BJ (cell line): ENCODE measurements at regions of chr1 and their contacts with region 1.

Region 1: DNA sequence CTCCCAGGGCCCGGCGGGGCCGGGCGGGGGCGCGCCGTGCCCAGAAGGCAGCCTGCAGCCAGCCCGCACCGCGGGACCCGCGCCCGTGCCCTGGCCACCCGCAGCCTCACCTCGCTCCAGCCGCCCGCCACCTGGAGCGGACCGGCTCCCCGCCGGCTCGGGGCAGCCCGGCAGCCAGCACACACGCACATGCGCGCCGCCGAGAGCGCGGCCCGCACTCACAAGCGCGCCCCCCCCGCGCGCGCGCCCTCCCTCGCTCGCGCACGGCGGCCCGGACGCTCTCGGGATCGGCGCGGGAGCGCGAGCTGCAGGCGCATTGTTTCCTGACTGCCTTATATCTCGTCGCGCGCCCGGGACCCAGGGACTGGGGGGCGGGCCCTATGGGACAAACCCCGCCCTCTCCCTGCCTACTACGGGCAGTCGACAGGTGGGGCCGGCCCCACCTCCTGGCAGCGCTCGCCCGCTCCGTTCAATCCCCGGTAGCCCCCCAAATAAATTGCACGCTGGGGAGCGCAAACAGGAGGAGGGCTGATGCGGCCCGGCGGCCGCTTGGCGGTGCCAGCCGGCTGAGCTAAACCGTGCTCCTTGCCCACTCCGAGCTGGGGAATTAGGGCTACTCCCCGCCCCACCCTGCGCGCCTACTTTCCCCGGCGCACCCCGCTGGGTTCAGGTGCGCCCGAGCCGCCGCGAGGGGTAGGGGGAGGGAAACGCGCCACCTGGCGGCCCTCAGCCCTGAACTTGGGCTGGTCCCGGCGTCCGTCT is at the start of gene MYCL:
- DNase-seq: no peak
- H3K4me3 ChIP-seq: peak within 1 kb of the TSS; percentile 55
- H3K27me3 ChIP-seq: peaks cover 14% of the 10 kb centered on the region
- CTCF ChIP-seq: peak; percentile 79
- polyA plus RNA-seq, gene MYCL: 0.22 TPM in 2 replicates

Region 2: GRCh38 chr1:39816415-39817090 is 85.3 kb before region 1 on chr1:
- CTCF ChIA-PET with region 1: interaction called, 112 read pairs
- POLR2A ChIA-PET with region 1: no interaction called
- DNase-seq: peak; percentile 65
- H3K4me3 ChIP-seq: no peak overlapping the region
- H3K27me3 ChIP-seq: peaks cover 3% of the 10 kb centered on the region
- CTCF ChIP-seq: peak; percentile 78

Region 3: GRCh38 chr1:39825432-39825951 is 76.4 kb before region 1 on chr1:
- CTCF ChIA-PET with region 1: interaction called, 23 read pairs
- POLR2A ChIA-PET with region 1: no interaction called
- DNase-seq: no peak
- H3K4me3 ChIP-seq: no peak overlapping the region
- H3K27me3 ChIP-seq: no peaks in the 10 kb centered on the region
- CTCF ChIP-seq: no peak

Region 4: GRCh38 chr1:39845275-39846116 is 56.4 kb before region 1 on chr1:
- CTCF ChIA-PET with region 1: interaction called, 20 read pairs
- POLR2A ChIA-PET with region 1: no interaction called
- DNase-seq: peak; percentile 18
- H3K4me3 ChIP-seq: no peak overlapping the region
- H3K27me3 ChIP-seq: no peaks in the 10 kb centered on the region
- CTCF ChIP-seq: no peak

Region 5: GRCh38 chr1:39995973-39996393 is 94.1 kb after region 1 on chr1:
- CTCF ChIA-PET with region 1: no interaction called
- POLR2A ChIA-PET with region 1: no interaction called
- DNase-seq: no peak
- H3K4me3 ChIP-seq: no peak overlapping the region
- H3K27me3 ChIP-seq: no peaks in the 10 kb centered on the region
- CTCF ChIP-seq: no peak

Region 6: GRCh38 chr1:40096977-40097782 is 195.3 kb after region 1 on chr1 and contains the start of gene PPT1:
- CTCF ChIA-PET with region 1: no interaction called
- POLR2A ChIA-PET with region 1: no interaction called
- DNase-seq: no peak
- H3K4me3 ChIP-seq: peak within 1 kb of the TSS; percentile 76
- H3K27me3 ChIP-seq: no peaks in the 10 kb centered on the region
- CTCF ChIP-seq: peak; percentile 40
- polyA plus RNA-seq, gene PPT1: 46.6 and 48.7 TPM in 2 replicates